T-cell (primary cell): ENCODE measurements at regions of chr12 and their contacts with region 1.

Region 1: GRCh38 chr12:120228291-120229070 is 27.6 kb upstream of the RPLP0 start:
- DNase-seq: peak; percentile 71 to 93 (median 86)
- ATAC-seq: peak; percentile 71 to 85 (median 76)
- H3K4me3 ChIP-seq: peak overlapping the region; percentile 20 to 42
- H3K4me3 Mint-ChIP-seq: peak overlapping the region; percentile 4 to 73 (median 35)
- H3K27ac ChIP-seq: peak overlapping the region; percentile 71
- H3K27ac Mint-ChIP-seq: peak overlapping the region; percentile 82 to 90
- H3K4me1 ChIP-seq: peaks cover 36 to 91% of the 10 kb centered on the region in 2 experiments
- H3K4me1 Mint-ChIP-seq: peaks cover 79 to 86% (median 86%) of the 10 kb centered on the region in 3 donors
- H3K27me3 ChIP-seq: no peaks in the 10 kb centered on the region
- H3K27me3 Mint-ChIP-seq: no peaks in the 10 kb centered on the region

Region 2: DNA sequence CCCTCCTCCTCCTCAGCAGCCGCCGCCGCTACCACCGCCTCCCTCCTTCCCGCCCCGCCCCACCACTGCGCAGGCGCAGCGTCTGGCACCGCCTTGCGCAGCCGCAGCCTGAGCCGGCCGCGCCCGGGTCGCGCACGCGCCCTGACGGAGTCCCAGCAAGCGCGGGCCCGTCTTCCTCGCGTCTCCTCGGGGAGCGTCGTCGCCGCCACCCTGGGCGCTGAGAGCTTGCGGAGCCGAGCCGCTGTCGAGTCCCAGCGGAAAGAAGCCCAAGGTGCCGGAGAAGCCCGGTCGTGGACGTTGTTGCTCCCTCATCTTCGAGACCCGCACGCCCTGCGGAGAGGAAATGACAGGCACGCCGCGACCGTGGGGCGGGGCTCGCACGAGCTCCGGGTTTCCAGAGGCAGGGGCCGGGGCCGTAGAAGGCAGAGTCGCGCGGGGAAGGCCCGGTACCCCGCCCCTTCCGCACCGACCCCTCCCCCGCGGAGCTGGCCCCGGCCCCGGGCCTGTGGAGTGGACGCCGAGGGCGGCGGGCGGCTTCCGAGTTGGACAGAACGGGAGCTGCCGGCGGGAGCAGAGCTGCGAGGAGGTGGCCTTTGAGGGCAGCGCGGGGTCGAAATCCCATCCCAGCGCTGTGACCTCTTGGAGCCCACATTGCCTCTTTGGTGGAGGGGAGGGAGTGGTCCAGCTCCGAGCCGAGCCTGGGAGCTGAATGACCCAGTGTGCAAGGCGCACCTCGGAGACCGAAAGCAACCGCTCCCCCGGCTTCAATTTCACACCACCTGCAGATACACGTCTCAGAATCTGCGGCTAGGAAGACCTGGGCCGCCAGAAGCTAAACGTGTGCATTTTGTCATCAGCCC is 111.5 kb before region 1 on chr12:
- CTCF ChIA-PET with region 1: interaction called in 1 of 2 experiments, 11 read pairs
- POLR2A ChIA-PET with region 1: no interaction called
- DNase-seq: peak; percentile 90 to 98 (median 95)
- ATAC-seq: peak; percentile 80 to 83 (median 81)
- H3K4me3 ChIP-seq: peak overlapping the region; percentile 88 to 96
- H3K4me3 Mint-ChIP-seq: peak overlapping the region; percentile 89 to 96 (median 91)
- H3K27ac ChIP-seq: peak overlapping the region; percentile 89
- H3K27ac Mint-ChIP-seq: peak overlapping the region; percentile 88 to 89
- H3K4me1 ChIP-seq: peaks cover 34 to 67% of the 10 kb centered on the region in 2 experiments
- H3K4me1 Mint-ChIP-seq: peaks cover 75 to 84% (median 80%) of the 10 kb centered on the region in 3 donors
- H3K27me3 ChIP-seq: no peaks in the 10 kb centered on the region
- H3K27me3 Mint-ChIP-seq: no peaks in the 10 kb centered on the region

Region 3: DNA sequence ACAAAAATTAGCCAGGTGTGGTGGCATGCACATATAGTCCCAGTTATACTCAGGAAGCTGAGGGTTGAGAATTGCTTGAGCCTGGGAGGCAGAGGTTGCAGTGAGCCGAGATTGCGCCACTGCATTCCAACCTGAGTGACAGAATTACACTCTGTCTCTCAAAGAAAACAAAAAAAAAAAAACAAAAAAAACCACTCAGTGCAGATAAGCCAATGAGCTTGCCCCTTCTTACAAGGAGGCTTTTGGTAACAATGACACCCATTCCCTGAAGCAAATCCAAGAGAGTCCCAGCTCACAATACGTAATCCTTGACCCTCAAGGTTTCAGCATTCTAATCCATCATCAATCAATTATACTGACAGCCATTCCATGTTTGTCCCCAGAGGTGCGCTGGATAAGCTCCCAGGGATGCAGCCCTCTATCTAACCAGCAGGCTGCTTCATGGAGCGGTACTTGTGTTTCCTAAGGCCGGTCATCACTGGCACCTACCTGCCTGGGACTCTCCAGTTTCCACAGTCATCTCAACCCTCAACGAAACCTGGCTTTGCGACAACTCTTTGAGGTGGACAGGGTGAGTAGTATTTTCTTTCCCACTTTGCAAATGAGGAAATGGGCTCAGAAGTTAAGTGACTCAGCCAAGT is 46.4 kb before region 1 on chr12:
- CTCF ChIA-PET with region 1: no interaction called
- POLR2A ChIA-PET with region 1: no interaction called
- DNase-seq: no peak
- ATAC-seq: no peak
- H3K4me3 ChIP-seq: no peak overlapping the region
- H3K4me3 Mint-ChIP-seq: no peak overlapping the region
- H3K27ac ChIP-seq: no peak overlapping the region
- H3K27ac Mint-ChIP-seq: no peak overlapping the region
- H3K4me1 ChIP-seq: no peaks in the 10 kb centered on the region
- H3K4me1 Mint-ChIP-seq: peaks cover 9 to 15% (median 11%) of the 10 kb centered on the region in 3 donors
- H3K27me3 ChIP-seq: no peaks in the 10 kb centered on the region
- H3K27me3 Mint-ChIP-seq: no peaks in the 10 kb centered on the region

Region 4: GRCh38 chr12:120200364-120200800 is 28.1 kb before region 1 on chr12:
- CTCF ChIA-PET with region 1: interaction called in 1 of 2 experiments, 40 read pairs
- POLR2A ChIA-PET with region 1: interaction called, 8 to 10 read pairs
- DNase-seq: no peak
- ATAC-seq: no peak
- H3K4me3 ChIP-seq: peak overlapping the region; percentile 66 to 92
- H3K4me3 Mint-ChIP-seq: peak overlapping the region; percentile 94 to 97 (median 96)
- H3K27ac ChIP-seq: peak overlapping the region; percentile 59
- H3K27ac Mint-ChIP-seq: peak overlapping the region; percentile 99
- H3K4me1 ChIP-seq: peaks cover 11 to 37% of the 10 kb centered on the region in 2 experiments
- H3K4me1 Mint-ChIP-seq: peaks cover 36 to 46% (median 43%) of the 10 kb centered on the region in 3 donors
- H3K27me3 ChIP-seq: no peaks in the 10 kb centered on the region
- H3K27me3 Mint-ChIP-seq: no peaks in the 10 kb centered on the region

Region 5: DNA sequence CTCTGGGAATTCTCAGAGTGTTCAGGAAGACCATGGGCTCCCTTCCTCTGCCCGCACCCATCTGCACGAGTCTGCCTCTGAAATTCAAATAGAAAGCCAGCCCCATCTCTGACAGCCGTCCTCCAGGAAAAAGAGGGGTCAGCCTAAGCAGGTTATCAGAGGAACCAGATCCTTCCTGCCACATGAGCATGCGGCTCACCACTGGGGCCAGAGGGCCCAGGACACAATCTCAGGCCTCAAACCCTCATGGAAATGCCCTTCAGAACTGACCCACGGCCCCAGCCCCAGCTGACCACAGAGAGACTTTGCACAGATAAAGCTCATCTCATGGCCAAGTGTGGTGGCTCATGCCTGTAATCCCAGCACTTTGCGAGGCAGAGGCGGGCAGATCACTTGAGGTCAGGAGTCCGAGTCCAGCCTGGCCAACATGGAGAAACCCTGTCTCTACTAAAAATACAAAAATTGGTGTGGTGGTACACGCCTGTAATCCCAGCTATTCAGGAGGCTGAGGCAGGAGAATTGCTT is 13.9 kb after region 1 on chr12:
- CTCF ChIA-PET with region 1: interaction called, 14 to 33 read pairs
- POLR2A ChIA-PET with region 1: interaction called in 1 of 2 experiments, 5 read pairs
- DNase-seq: no peak
- ATAC-seq: no peak
- H3K4me3 ChIP-seq: no peak overlapping the region
- H3K4me3 Mint-ChIP-seq: no peak overlapping the region
- H3K27ac ChIP-seq: no peak overlapping the region
- H3K27ac Mint-ChIP-seq: peak overlapping the region in 1 of 2 donors; percentile 7
- H3K4me1 ChIP-seq: peaks cover 13 to 84% of the 10 kb centered on the region in 2 experiments
- H3K4me1 Mint-ChIP-seq: peaks cover 64 to 80% (median 80%) of the 10 kb centered on the region in 3 donors
- H3K27me3 ChIP-seq: no peaks in the 10 kb centered on the region
- H3K27me3 Mint-ChIP-seq: no peaks in the 10 kb centered on the region

Region 6: DNA sequence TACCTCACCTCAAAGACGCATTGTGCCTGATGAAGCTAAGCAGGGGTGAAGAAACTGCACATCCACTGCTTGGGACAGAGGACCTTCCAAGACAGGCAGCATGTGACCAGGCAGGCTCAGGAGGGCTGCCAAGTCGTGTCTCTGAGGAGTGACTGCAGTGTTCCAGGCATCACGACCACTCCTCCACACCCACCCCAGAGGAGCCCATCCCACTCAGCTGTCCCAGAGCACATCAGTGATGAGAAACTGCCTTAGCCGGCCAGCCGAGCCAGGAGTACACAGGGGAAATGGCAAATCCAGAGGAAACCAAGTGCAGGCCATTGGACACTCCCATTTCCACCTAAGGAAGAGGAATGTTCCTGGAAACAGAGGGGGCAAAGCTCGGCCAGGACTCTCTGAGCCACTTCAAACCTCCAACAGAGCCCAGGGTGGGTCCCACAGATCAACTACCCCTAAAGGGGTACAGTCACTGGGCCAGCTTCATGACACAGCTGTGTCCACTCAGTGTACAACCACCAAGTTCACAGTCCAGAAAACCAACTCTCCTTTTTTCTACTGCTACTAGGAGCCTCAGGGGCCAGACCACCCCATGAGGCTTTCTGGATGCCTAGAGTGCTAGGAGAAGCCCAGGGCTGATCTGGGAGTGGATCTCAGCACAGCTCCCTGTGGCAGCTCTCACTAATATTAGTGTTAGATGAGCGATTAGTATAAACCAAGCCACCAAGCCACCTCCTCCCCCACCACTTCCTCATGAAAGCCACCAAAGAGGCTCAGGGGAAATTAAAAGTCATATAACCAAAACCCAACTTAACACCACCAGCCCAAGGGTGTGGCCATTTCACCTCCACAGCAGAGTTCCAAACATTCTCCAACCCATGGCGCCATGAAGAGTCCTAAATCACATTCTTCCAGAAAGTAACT is 21.7 kb after region 1 on chr12:
- CTCF ChIA-PET with region 1: interaction called, 8 to 36 read pairs
- POLR2A ChIA-PET with region 1: interaction called, 3 to 7 read pairs
- DNase-seq: peak in 17 of 35 experiments; percentile 25 to 66 (median 40)
- ATAC-seq: peak in 1 of 4 experiments; percentile 13
- H3K4me3 ChIP-seq: peak overlapping the region; percentile 26 to 30
- H3K4me3 Mint-ChIP-seq: peak overlapping the region; percentile 62 to 64 (median 63)
- H3K27ac ChIP-seq: peak overlapping the region; percentile 75
- H3K27ac Mint-ChIP-seq: peak overlapping the region; percentile 88
- H3K4me1 ChIP-seq: peaks cover 53 to 85% of the 10 kb centered on the region in 2 experiments
- H3K4me1 Mint-ChIP-seq: peaks cover 83 to 86% (median 83%) of the 10 kb centered on the region in 3 donors
- H3K27me3 ChIP-seq: no peaks in the 10 kb centered on the region
- H3K27me3 Mint-ChIP-seq: no peaks in the 10 kb centered on the region

Region 7: GRCh38 chr12:120265473-120266179 is 37.1 kb after region 1 on chr12 and contains the start of gene PXN:
- CTCF ChIA-PET with region 1: interaction called, 40 to 162 read pairs
- POLR2A ChIA-PET with region 1: interaction called, 8 to 15 read pairs
- DNase-seq: peak; percentile 70 to 96 (median 88)
- ATAC-seq: peak; percentile 88 to 95 (median 89)
- H3K4me3 ChIP-seq: peak within 1 kb of the TSS; percentile 85 to 94
- H3K4me3 Mint-ChIP-seq: peak within 1 kb of the TSS; percentile 90 to 97 (median 94)
- H3K27ac ChIP-seq: peak within 1 kb of the TSS; percentile 74
- H3K27ac Mint-ChIP-seq: peak within 1 kb of the TSS; percentile 88 to 93
- H3K4me1 ChIP-seq: peaks cover 30 to 48% of the 10 kb centered on the region in 2 experiments
- H3K4me1 Mint-ChIP-seq: peaks cover 41 to 47% (median 41%) of the 10 kb centered on the region in 3 donors
- H3K27me3 ChIP-seq: no peaks in the 10 kb centered on the region
- H3K27me3 Mint-ChIP-seq: no peaks in the 10 kb centered on the region
- total RNA-seq, gene PXN: 128 to 202 (median 137) TPM